Breast epithelium (tissue), 4 donors: ENCODE measurements at regions of chr10 and their contacts with region 1.

Region 1: DNA sequence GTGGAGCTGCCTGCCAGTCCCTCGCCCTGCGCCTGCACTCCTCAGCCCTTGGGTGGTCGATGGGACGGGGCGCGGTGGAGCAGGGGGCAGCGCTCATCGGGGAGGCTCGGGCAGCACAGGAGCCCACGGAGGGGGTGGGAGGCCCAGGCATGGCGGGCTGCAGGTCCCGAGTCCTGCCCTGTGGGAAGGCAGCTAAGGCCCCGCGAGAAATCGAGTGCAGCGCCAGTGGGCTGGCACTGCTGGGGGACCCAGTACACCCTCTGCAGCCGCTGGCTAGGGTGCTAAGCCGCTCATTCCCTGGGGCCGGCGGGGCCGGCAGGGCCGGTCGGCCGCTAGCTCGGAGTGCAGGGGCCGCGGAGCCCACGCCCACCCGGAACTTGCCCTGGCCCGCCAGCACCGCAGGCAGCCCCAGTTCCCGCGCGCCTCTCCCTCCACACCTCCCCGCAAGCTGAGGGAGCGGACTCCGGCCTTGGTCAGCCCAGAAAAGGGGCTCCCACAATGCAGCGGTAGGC is 565.9 kb upstream of the NRG3 start:
- DNase-seq: no peak
- H3K4me3 ChIP-seq: no peak overlapping the region
- H3K27ac ChIP-seq: no peak overlapping the region
- H3K4me1 ChIP-seq: no peaks in the 10 kb centered on the region
- H3K27me3 ChIP-seq: no peaks in the 10 kb centered on the region
- CTCF ChIP-seq: no peak
- POLR2A ChIP-seq: no peak

Region 2: GRCh38 chr10:80126876-80127275 is 1182.2 kb before region 1 on chr10:
- intact Hi-C with region 1: no loop called
- DNase-seq: no peak
- H3K4me3 ChIP-seq: no peak overlapping the region
- H3K27ac ChIP-seq: no peak overlapping the region
- H3K4me1 ChIP-seq: no peaks in the 10 kb centered on the region
- H3K27me3 ChIP-seq: no peaks in the 10 kb centered on the region
- CTCF ChIP-seq: no peak
- POLR2A ChIP-seq: no peak

Region 3: GRCh38 chr10:80319725-80320290 is 989.3 kb before region 1 on chr10:
- intact Hi-C with region 1: loop called (anchors 10 kb)
- DNase-seq: no peak
- H3K4me3 ChIP-seq: no peak overlapping the region
- H3K27ac ChIP-seq: no peak overlapping the region
- H3K4me1 ChIP-seq: no peaks in the 10 kb centered on the region
- H3K27me3 ChIP-seq: no peaks in the 10 kb centered on the region
- CTCF ChIP-seq: no peak
- POLR2A ChIP-seq: no peak

Region 4: DNA sequence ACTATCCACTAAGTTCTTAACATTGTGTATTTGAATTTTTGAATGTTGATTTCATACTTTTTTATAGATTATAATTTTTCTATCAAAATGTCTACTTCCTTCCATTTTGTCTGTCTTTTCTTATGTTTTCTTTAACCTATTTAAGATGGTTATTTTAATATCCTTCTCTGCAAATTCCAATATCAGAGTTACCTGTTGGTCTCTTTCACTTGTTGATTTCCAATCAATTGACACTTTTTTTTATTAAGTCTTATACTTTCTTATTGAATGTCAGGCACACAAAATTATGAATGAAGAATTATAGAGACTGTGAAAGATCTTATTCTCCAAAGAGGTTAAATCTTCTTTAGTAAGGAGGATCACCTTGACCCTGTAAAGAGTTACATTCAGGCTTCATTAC is 117.6 kb after region 1 on chr10:
- intact Hi-C with region 1: no loop called
- DNase-seq: no peak
- H3K4me3 ChIP-seq: no peak overlapping the region
- H3K27ac ChIP-seq: no peak overlapping the region
- H3K4me1 ChIP-seq: no peaks in the 10 kb centered on the region
- H3K27me3 ChIP-seq: no peaks in the 10 kb centered on the region
- CTCF ChIP-seq: no peak
- POLR2A ChIP-seq: no peak